WTC11 (cell line): ENCODE measurements at regions of chr18 and their contacts with region 1.

Region 1: DNA sequence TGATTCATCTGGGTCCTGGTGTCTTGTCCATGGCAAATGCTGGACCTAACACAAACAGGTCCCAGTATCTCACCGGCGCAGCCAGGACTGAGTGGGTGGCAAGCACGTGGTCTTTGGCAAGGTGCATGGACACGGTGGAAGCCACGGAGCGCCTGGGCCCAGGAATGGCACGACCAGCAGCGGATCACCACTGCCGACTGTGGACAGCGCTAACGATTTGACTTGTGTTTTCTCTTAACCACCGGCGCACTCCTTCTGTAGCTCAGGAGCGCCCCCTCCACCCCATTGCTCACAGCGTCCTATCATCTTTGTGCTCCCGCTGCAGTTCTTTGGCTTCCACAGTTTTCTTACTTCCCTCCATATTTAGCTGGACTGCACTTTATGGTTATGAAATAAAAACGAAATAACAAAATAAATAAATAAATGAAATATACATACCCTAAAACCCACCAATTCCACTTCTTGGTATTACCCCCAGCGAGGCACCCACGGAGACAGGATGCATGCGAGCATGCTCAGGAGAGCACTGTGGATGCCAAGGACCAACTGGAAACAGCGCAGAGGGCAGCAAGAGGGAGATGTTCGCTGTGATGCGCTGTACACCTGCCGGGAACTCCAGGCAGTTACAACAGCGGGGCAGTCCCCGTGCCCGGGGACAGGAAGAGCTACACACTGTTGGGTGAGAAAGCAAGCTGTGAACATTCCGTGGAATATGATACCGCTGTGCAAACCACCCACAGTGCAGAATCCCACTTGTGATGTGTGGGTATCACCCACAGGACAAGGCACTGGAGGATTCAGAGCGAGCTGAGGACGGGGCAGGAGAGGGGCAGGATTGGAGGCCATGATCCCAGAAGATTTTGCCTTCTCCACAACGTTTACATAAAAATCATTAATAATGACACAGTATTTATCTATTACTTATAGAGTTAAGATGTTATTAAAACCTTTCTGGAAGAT is 7.0 kb upstream of the CIDEA start:
- DNase-seq: peak; percentile 78
- ATAC-seq: peak; percentile 99
- H3K4me3 Mint-ChIP-seq: no peak overlapping the region
- H3K27ac Mint-ChIP-seq: no peak overlapping the region
- H3K4me1 Mint-ChIP-seq: no peaks in the 10 kb centered on the region
- H3K27me3 Mint-ChIP-seq: peaks cover 41% of the 10 kb centered on the region
- CTCF ChIP-seq: peak; percentile 42; the same call in 1 of the 2 replicates

Region 2: GRCh38 chr18:12057419-12058039 is 189.6 kb before region 1 on chr18:
- CTCF ChIA-PET with region 1: interaction called, 12 read pairs
- POLR2A ChIA-PET with region 1: no interaction called
- DNase-seq: peak; percentile 57
- ATAC-seq: peak; percentile 90
- H3K4me3 Mint-ChIP-seq: no peak overlapping the region
- H3K27ac Mint-ChIP-seq: no peak overlapping the region
- H3K4me1 Mint-ChIP-seq: no peaks in the 10 kb centered on the region
- H3K27me3 Mint-ChIP-seq: no peaks in the 10 kb centered on the region; the same call in 1 of the 2 replicates
- CTCF ChIP-seq: peak; percentile 24

Region 3: DNA sequence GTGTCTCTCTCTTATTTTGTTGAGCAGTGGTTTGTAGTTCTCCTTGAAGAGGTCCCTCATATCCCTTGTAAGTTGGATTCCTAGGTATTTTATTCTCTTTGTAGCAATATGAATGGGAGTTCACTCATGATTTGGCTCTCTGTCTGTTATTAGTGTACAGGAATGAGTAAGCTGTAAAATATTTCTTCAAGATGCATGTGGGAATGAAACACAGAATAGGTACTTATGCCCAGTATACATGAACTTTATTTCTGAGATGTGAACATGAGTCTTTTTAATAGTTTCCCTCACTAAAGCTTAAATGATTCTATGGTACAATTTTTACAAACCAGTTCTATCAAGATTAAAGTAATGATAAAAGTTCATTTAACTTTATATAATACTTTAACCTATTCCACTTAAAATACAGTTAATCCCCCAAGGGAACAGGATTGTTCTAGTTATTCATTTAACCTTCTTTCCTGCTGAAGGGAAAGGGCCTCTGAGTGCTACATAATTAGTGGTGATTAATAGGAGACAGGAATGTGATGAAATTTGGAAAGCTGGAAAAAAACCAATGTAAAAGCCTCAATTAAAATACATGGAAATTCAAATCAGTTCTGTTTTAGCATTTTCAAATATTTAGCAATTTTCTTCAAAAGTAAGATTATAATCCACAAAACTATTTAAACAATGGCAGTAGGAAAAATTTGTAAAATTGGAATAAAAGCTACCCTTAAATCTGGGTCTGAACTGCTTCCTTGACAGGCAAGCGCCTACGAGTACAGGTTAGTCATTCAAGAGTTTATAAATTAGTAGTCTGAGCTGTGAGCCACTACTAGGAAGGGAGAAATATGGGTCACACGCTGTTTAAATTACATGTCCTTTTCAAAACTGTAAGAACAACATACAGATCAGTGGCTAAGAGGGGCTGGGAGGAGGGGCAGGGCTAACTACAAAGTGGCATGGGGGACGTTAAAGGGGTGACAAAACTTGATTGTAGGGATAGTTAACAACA is 381.9 kb after region 1 on chr18:
- CTCF ChIA-PET with region 1: no interaction called
- POLR2A ChIA-PET with region 1: no interaction called
- DNase-seq: no peak
- ATAC-seq: no peak
- H3K4me3 Mint-ChIP-seq: no peak overlapping the region
- H3K27ac Mint-ChIP-seq: no peak overlapping the region
- H3K4me1 Mint-ChIP-seq: peaks cover 5% of the 10 kb centered on the region; the same call in 1 of the 2 replicates
- H3K27me3 Mint-ChIP-seq: no peaks in the 10 kb centered on the region
- CTCF ChIP-seq: no peak